ENCODE measurements at regions of chr6 and their contacts with region 1.

Region 1: DNA sequence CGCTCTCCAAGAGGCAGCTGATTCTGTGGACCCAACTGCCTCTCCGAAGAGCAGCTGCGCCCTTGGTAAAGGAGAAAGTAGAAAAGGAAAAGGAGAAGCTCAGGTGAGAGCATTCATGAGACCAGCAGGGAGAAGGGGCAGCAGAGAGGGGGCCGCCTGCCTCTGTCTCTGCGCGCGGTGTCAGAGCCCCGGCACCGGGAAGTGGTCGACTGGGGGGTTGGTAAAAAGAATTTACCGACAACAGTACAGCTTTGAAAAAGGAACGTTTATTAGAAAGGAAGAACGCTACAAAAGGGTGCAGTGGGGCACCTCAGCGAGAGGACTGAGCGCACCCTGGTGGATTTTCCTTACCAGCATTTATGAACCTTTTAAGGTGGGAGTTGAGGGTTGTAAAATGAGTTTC is 61.9 kb downstream of the GPR6 start:
- DNase-seq: peak; percentile 49 to 85
- H3K4me3 ChIP-seq: peak overlapping the region; percentile 1 to 22
- H3K27ac ChIP-seq: no peak overlapping the region
- H3K4me1 ChIP-seq: peaks cover 12% of the 10 kb centered on the region
- H3K27me3 ChIP-seq: no peaks in the 10 kb centered on the region
- CTCF ChIP-seq: peak in 1 of 3 experiments; percentile 19
- POLR2A ChIP-seq: no peak

Region 2: GRCh38 chr6:109702791-109703190 is 337.2 kb before region 1 on chr6:
- intact Hi-C with region 1: loop called (anchors 1 kb)
- DNase-seq: no peak
- H3K4me3 ChIP-seq: no peak overlapping the region
- H3K27ac ChIP-seq: no peak overlapping the region
- H3K4me1 ChIP-seq: no peaks in the 10 kb centered on the region
- H3K27me3 ChIP-seq: no peaks in the 10 kb centered on the region
- CTCF ChIP-seq: no peak
- POLR2A ChIP-seq: no peak

Region 3: GRCh38 chr6:110075406-110075805 is 35.4 kb after region 1 on chr6:
- intact Hi-C with region 1: no loop called
- DNase-seq: no peak
- H3K4me3 ChIP-seq: no peak overlapping the region
- H3K27ac ChIP-seq: no peak overlapping the region
- H3K4me1 ChIP-seq: no peaks in the 10 kb centered on the region
- H3K27me3 ChIP-seq: no peaks in the 10 kb centered on the region
- CTCF ChIP-seq: no peak
- POLR2A ChIP-seq: no peak

Region 4: GRCh38 chr6:110398778-110399177 is 358.8 kb after region 1 on chr6:
- intact Hi-C with region 1: loop called (anchors 10 kb)
- DNase-seq: no peak
- H3K4me3 ChIP-seq: no peak overlapping the region
- H3K27ac ChIP-seq: no peak overlapping the region
- H3K4me1 ChIP-seq: no peaks in the 10 kb centered on the region
- H3K27me3 ChIP-seq: no peaks in the 10 kb centered on the region
- CTCF ChIP-seq: no peak
- POLR2A ChIP-seq: no peak